Activated CD4-positive, alpha-beta memory T cell treated with anti-CD3 and anti-CD28 coated beads for 36 hours (primary cell): ENCODE measurements at regions of chr16 and their contacts with region 1.

Region 1: GRCh38 chr16:10988164-10988803 is 43.9 kb downstream of the CLEC16A start:
- DNase-seq: peak; percentile 93
- H3K4me3 Mint-ChIP-seq: peak overlapping the region; percentile 33
- H3K27ac Mint-ChIP-seq: peak overlapping the region; percentile 98
- H3K4me1 Mint-ChIP-seq: peaks cover 90% of the 10 kb centered on the region
- H3K27me3 Mint-ChIP-seq: no peaks in the 10 kb centered on the region

Region 2: DNA sequence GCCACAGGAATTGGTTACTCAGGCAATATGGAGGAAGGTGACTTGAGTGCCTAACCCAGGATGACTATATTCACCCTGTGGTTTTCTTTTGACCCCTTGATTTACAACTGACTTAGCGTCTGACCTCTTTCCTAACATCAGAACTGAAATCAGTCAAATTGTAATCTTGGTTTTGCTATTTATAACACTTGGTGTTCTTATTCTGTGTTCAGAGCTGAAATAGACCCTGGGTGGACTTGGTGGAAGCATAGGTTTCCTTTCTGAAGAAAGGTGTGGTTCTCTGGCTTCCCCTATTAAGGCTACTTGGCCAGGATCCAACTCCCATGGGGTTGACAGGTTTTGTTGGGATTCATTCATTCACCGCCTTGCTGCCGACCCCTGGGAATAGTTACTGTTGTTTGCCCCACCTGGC is 36.8 kb after region 1 on chr16:
- CTCF ChIA-PET with region 1: interaction called, 7 read pairs
- POLR2A ChIA-PET with region 1: interaction called, 8 read pairs
- intact Hi-C with region 1: loop called (anchors 1 kb)
- DNase-seq: peak; percentile 24
- H3K4me3 Mint-ChIP-seq: no peak overlapping the region
- H3K27ac Mint-ChIP-seq: peak overlapping the region; percentile 91
- H3K4me1 Mint-ChIP-seq: peaks cover 22% of the 10 kb centered on the region
- H3K27me3 Mint-ChIP-seq: no peaks in the 10 kb centered on the region

Region 3: DNA sequence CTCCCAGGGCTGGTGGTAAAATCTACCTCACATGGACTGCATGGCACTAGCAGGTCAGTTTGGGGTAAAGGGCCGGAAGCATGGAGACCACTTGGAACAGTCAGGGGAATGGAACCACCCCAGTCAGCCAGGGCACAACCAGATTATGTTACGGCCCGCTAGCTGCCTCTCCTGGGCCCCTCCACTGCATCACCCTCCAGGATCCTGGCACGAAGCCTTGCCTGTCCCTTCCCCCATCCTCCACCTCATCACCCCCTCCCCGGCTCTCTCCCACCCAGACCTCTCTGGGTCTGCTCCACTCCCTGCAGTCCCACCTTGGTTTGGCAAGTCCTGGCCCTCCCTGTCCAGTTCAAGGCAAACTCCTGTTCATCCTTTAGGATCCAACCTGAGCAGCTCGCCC is 47.8 kb after region 1 on chr16:
- CTCF ChIA-PET with region 1: no interaction called
- POLR2A ChIA-PET with region 1: no interaction called
- intact Hi-C with region 1: no loop called
- DNase-seq: no peak
- H3K4me3 Mint-ChIP-seq: no peak overlapping the region
- H3K27ac Mint-ChIP-seq: no peak overlapping the region
- H3K4me1 Mint-ChIP-seq: no peaks in the 10 kb centered on the region
- H3K27me3 Mint-ChIP-seq: no peaks in the 10 kb centered on the region

Region 4: GRCh38 chr16:11076259-11077018 is 88.2 kb after region 1 on chr16:
- CTCF ChIA-PET with region 1: interaction called, 3 read pairs
- POLR2A ChIA-PET with region 1: no interaction called
- intact Hi-C with region 1: loop called (anchors 1 kb)
- DNase-seq: peak; percentile 88
- H3K4me3 Mint-ChIP-seq: no peak overlapping the region
- H3K27ac Mint-ChIP-seq: peak overlapping the region; percentile 94
- H3K4me1 Mint-ChIP-seq: peaks cover 96% of the 10 kb centered on the region
- H3K27me3 Mint-ChIP-seq: no peaks in the 10 kb centered on the region

Region 5: DNA sequence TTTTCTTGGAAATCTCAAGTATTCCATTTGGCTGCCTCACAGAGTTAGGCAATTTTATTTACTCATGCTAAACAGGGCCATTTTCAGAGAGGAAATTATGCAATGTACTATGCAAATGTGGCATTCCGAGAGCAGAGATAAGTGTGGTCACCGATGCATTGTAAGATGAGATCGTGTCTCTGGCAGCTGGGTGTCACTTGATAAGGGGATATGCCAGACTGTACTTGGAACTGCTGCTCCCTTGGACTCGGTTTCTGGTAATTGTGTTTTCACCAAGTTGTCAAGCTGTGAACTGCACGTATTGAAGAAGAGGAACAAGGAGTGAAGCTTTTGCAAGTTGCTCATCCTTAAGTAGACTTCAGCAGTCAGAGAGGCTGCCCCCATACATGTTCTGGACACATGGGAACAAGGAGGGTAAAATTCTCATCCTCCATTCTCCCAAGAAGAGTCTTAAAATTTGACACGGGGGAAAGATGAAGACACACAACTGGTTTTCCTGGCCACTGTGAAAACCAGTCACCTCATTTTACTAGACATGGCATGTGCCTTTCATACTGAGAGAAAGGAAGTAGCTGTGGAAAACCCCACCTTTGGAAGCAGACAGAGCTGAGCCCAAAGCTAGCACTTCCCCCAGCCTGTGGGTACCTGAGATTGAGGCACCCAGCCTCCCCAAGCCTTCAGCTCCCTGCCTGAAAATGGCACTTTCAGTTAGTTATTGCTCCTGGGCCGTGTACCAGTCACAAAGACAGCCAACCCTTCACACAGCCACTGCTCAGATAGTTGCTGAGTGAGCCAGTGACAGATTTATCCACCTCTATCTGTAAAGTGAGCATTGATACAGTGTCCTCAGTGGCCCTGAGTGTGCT is 117.0 kb after region 1 on chr16:
- CTCF ChIA-PET with region 1: interaction called, 4 read pairs
- POLR2A ChIA-PET with region 1: interaction called, 4 read pairs
- intact Hi-C with region 1: loop called (anchors 1 kb)
- DNase-seq: peak; percentile 69
- H3K4me3 Mint-ChIP-seq: peak overlapping the region; percentile 56
- H3K27ac Mint-ChIP-seq: peak overlapping the region; percentile 97
- H3K4me1 Mint-ChIP-seq: peaks cover 72% of the 10 kb centered on the region
- H3K27me3 Mint-ChIP-seq: no peaks in the 10 kb centered on the region

Region 6: DNA sequence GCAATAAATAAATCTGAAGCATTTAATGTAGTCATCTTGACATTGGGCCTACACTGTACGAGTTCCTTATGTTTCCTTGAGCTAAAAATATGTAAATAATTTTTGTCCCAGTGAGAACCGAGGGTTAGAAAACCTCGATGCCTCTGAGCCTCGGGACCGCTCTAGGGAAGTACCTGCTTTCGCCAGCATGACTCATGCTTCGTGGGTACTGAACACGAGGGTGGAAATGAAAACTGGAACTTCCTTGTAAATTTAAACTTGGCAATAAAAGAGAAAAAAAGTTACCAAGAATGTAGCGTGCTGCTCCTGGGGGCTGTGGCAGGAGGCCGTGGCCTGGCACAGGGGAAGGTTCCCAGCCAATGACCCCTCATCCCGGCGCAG is 193.6 kb after region 1 on chr16:
- CTCF ChIA-PET with region 1: interaction called, 3 read pairs
- POLR2A ChIA-PET with region 1: interaction called, 3 read pairs
- intact Hi-C with region 1: loop called (anchors 2 kb)
- DNase-seq: peak; percentile 63
- H3K4me3 Mint-ChIP-seq: no peak overlapping the region
- H3K27ac Mint-ChIP-seq: peak overlapping the region; percentile 86
- H3K4me1 Mint-ChIP-seq: peaks cover 46% of the 10 kb centered on the region
- H3K27me3 Mint-ChIP-seq: no peaks in the 10 kb centered on the region

Region 7: GRCh38 chr16:11232852-11233726 is 244.8 kb after region 1 on chr16:
- CTCF ChIA-PET with region 1: interaction called, 4 read pairs
- POLR2A ChIA-PET with region 1: interaction called, 4 read pairs
- intact Hi-C with region 1: loop called (anchors 1 kb)
- DNase-seq: peak; percentile 97
- H3K4me3 Mint-ChIP-seq: peak overlapping the region; percentile 62
- H3K27ac Mint-ChIP-seq: peak overlapping the region; percentile 99
- H3K4me1 Mint-ChIP-seq: peaks cover 74% of the 10 kb centered on the region
- H3K27me3 Mint-ChIP-seq: no peaks in the 10 kb centered on the region

Region 8: GRCh38 chr16:11379420-11379819 is 391.1 kb after region 1 on chr16:
- CTCF ChIA-PET with region 1: no interaction called
- POLR2A ChIA-PET with region 1: no interaction called
- intact Hi-C with region 1: loop called (anchors 1 kb)
- DNase-seq: peak; percentile 88
- H3K4me3 Mint-ChIP-seq: peak overlapping the region; percentile 9
- H3K27ac Mint-ChIP-seq: peak overlapping the region; percentile 79
- H3K4me1 Mint-ChIP-seq: peaks cover 23% of the 10 kb centered on the region
- H3K27me3 Mint-ChIP-seq: peaks cover 2% of the 10 kb centered on the region